ENCODE measurements at regions of chr4 and their contacts with region 1.

Region 1: DNA sequence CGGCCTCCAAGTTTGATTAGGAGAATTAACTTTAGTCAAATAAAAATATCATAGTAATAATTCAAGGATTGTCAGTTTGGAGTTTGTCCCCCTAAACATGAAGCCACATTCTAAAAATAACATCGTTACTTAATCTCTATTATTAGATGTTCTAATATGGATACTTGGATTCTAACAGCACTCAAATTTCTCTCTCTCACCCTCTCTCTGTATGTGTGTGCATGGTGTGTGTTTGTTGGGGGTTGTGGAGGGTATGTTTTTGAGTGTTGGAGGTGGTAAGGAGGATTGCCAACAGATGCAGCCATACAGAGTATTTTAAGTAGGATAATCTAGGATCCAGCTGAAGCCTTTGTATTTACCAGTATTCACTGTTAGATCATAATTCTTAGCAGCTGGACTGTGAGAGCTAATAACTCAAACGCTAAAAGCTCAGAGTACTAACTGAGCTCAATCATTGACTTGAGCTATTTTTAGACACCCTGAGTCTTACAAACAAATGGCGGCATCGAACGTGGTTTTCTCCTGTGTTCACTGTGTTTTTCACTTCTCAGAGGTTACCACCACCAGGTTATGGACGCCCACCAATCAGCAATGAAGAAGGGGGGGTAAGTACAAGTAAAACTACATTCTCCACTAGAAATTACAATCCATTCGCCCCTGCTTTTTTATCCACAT is 8.8 kb downstream of the ENAM start:
- DNase-seq: no peak
- ATAC-seq: no peak
- H3K4me3 ChIP-seq: no peak overlapping the region
- H3K4me3 Mint-ChIP-seq: no peak overlapping the region
- H3K27ac ChIP-seq: no peak overlapping the region
- H3K27ac Mint-ChIP-seq: no peak overlapping the region
- H3K4me1 ChIP-seq: no peaks in the 10 kb centered on the region
- H3K4me1 Mint-ChIP-seq: peaks cover 0 to 2% (median 0%) of the 10 kb centered on the region in 7 donors
- H3K27me3 ChIP-seq: no peaks in the 10 kb centered on the region
- H3K27me3 Mint-ChIP-seq: peaks cover 9 to 20% (median 11%) of the 10 kb centered on the region in 5 donors

Region 2: GRCh38 chr4:71277353-71277752 is 640.0 kb after region 1 on chr4:
- CTCF ChIA-PET with region 1: no interaction called
- POLR2A ChIA-PET with region 1: interaction called, 13 read pairs
- intact Hi-C with region 1: no loop called
- DNase-seq: no peak
- ATAC-seq: no peak
- H3K4me3 ChIP-seq: no peak overlapping the region
- H3K4me3 Mint-ChIP-seq: no peak overlapping the region
- H3K27ac ChIP-seq: no peak overlapping the region
- H3K27ac Mint-ChIP-seq: peak overlapping the region in 1 of 9 donors; percentile 32
- H3K4me1 ChIP-seq: peaks cover 0 to 19% of the 10 kb centered on the region in 2 donors
- H3K4me1 Mint-ChIP-seq: peaks cover 8 to 23% (median 16%) of the 10 kb centered on the region in 7 donors
- H3K27me3 ChIP-seq: no peaks in the 10 kb centered on the region
- H3K27me3 Mint-ChIP-seq: peaks cover 0 to 2% (median 0%) of the 10 kb centered on the region in 5 donors